ENCODE measurements at regions of chr6 and their contacts with region 1.

Region 1: DNA sequence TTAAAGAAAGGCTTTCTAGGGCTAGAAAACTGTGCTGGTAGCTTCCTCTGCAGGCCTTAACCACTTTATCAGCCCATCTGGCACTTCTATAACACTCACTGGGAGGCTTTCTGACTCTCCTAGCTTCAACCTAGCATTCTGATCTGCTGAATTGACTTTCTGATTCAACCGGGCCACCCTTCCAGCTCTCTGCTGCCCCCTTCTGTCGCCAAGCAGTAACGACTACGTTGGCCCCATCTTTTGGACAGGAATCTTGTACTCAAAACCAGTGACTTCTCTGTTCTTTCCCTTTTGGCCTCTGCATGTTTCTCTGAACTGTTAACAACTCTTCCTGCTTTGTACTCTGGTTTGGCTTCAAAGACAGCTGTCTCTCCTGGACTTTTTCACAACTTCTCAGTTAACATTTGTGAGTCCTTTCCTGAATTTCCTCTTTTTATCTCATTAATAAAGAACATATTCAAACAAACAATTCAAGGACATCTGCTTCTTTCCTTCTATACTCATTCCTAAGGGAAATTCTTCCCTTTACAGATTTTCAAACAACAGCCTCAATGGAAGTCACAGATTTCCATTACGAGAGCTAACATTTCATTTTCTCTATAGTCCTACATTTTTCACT is 43.9 kb upstream of the FAM135A start:
- DNase-seq: no peak
- ATAC-seq: peak; percentile 78 to 79

Region 2: GRCh38 chr6:70310063-70310694 is 59.3 kb before region 1 on chr6:
- intact Hi-C with region 1: loop called (anchors 2 kb)
- DNase-seq: no peak
- ATAC-seq: no peak

Region 3: GRCh38 chr6:70753870-70754380 is 384.5 kb after region 1 on chr6:
- intact Hi-C with region 1: no loop called
- DNase-seq: no peak
- ATAC-seq: no peak

Measured in left cardiac atrium (tissue), 4 donors.